Naive thymus-derived CD4-positive, alpha-beta T cell (primary cell): ENCODE measurements at regions of chr20 and their contacts with region 1.

Region 1: GRCh38 chr20:63657937-63658748 is at the start of gene RTEL1:
- DNase-seq: peak; percentile 79 to 99 (median 89)
- ATAC-seq: peak; percentile 90
- H3K4me3 ChIP-seq: peak within 1 kb of the TSS; percentile 100
- H3K4me3 Mint-ChIP-seq: peak within 1 kb of the TSS; percentile 86 to 97 (median 94)
- H3K27ac ChIP-seq: peak within 1 kb of the TSS; percentile 83
- H3K27ac Mint-ChIP-seq: peak within 1 kb of the TSS; percentile 93 to 97 (median 95)
- H3K4me1 ChIP-seq: peaks cover 18 to 20% of the 10 kb centered on the region in 2 donors
- H3K4me1 Mint-ChIP-seq: peaks cover 14 to 57% (median 36%) of the 10 kb centered on the region in 7 donors
- H3K27me3 ChIP-seq: no peaks in the 10 kb centered on the region
- H3K27me3 Mint-ChIP-seq: peaks cover 0 to 2% (median 0%) of the 10 kb centered on the region in 5 donors
- total RNA-seq, gene RTEL1: 28.4 to 47.2 (median 32.4) TPM

Region 2: GRCh38 chr20:62386383-62387218 is 1271.5 kb before region 1 on chr20 and contains the start of gene RPS21:
- CTCF ChIA-PET with region 1: no interaction called
- POLR2A ChIA-PET with region 1: no interaction called
- intact Hi-C with region 1: loop called in 1 of 2 experiments (anchors 10 kb)
- DNase-seq: peak; percentile 89 to 95 (median 92)
- ATAC-seq: peak; percentile 95
- H3K4me3 ChIP-seq: peak within 1 kb of the TSS; percentile 94
- H3K4me3 Mint-ChIP-seq: peak within 1 kb of the TSS; percentile 90 to 96 (median 92)
- H3K27ac ChIP-seq: peak within 1 kb of the TSS; percentile 98
- H3K27ac Mint-ChIP-seq: peak within 1 kb of the TSS; percentile 89 to 96 (median 93)
- H3K4me1 ChIP-seq: peaks cover 24 to 28% of the 10 kb centered on the region in 2 donors
- H3K4me1 Mint-ChIP-seq: peaks cover 40 to 59% (median 50%) of the 10 kb centered on the region in 7 donors
- H3K27me3 ChIP-seq: no peaks in the 10 kb centered on the region
- H3K27me3 Mint-ChIP-seq: no peaks in the 10 kb centered on the region
- total RNA-seq, gene RPS21: 2,026 to 3,407 (median 3,308) TPM

Region 3: GRCh38 chr20:63580796-63581461 is 77.2 kb before region 1 on chr20:
- CTCF ChIA-PET with region 1: interaction called, 3 read pairs
- POLR2A ChIA-PET with region 1: no interaction called
- intact Hi-C with region 1: loop called in 1 of 2 experiments (anchors 2 kb)
- DNase-seq: peak; percentile 30 to 87 (median 81)
- ATAC-seq: peak; percentile 96
- H3K4me3 ChIP-seq: no peak overlapping the region
- H3K4me3 Mint-ChIP-seq: peak overlapping the region in 1 of 10 donors; percentile 17
- H3K27ac ChIP-seq: no peak overlapping the region
- H3K27ac Mint-ChIP-seq: peak overlapping the region in 1 of 9 donors; percentile 74
- H3K4me1 ChIP-seq: peaks cover 0 to 10% of the 10 kb centered on the region in 2 donors
- H3K4me1 Mint-ChIP-seq: peaks cover 0 to 17% (median 14%) of the 10 kb centered on the region in 7 donors
- H3K27me3 ChIP-seq: no peaks in the 10 kb centered on the region
- H3K27me3 Mint-ChIP-seq: peaks cover 0 to 42% (median 0%) of the 10 kb centered on the region in 5 donors

Region 4: GRCh38 chr20:63627129-63627750 is 30.9 kb before region 1 on chr20:
- CTCF ChIA-PET with region 1: no interaction called
- POLR2A ChIA-PET with region 1: interaction called, 20 read pairs
- intact Hi-C with region 1: loop called (anchors 1 kb)
- DNase-seq: peak; percentile 74 to 99 (median 97)
- ATAC-seq: peak; percentile 93
- H3K4me3 ChIP-seq: peak overlapping the region; percentile 96
- H3K4me3 Mint-ChIP-seq: peak overlapping the region; percentile 93 to 99 (median 98)
- H3K27ac ChIP-seq: peak overlapping the region; percentile 85
- H3K27ac Mint-ChIP-seq: peak overlapping the region; percentile 79 to 98 (median 95)
- H3K4me1 ChIP-seq: peaks cover 29 to 40% of the 10 kb centered on the region in 2 donors
- H3K4me1 Mint-ChIP-seq: peaks cover 28 to 64% (median 42%) of the 10 kb centered on the region in 7 donors
- H3K27me3 ChIP-seq: no peaks in the 10 kb centered on the region
- H3K27me3 Mint-ChIP-seq: no peaks in the 10 kb centered on the region

Region 5: DNA sequence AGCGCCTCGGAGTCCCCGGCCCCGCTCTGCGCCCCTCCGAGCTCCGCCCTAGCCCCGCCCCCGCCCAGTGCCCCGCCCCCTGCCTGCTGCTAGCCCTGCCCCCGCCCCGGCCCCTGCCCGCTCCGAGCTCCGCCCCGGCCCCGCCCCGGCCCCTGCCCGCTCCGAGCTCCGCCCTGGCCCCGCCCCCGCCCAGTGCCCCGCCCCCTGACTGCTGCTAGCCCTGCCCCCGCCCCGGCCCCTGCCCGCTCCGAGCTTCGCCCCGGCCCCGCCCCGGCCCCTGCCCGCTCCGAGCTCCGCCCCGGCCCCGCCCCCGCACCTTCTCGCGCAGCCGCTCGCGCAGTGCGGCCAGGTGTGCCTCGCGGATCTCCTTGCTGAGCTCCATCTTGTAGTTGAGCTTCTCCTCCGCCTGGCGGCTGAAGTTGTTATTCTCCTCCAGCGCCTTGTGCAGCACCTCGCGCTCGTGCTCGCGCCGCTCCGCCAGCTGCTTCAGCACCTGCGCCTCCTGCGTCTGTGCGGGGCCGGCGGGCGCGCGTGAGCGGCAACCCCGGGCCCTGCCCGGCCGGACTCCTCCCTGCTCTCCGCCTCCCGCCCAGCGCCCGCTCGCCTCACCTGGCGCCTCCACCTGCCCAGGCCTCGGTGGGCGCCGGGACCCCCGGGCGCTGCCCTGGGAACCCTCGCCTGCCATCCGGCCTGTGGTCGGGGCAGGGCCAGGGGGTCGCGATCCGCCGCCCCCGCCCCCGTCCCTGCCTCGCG is 16.2 kb before region 1 on chr20:
- CTCF ChIA-PET with region 1: interaction called, 3 read pairs
- POLR2A ChIA-PET with region 1: interaction called, 53 read pairs
- intact Hi-C with region 1: loop called in 1 of 2 experiments (anchors 1 kb)
- DNase-seq: peak; percentile 94 to 98 (median 97)
- ATAC-seq: peak; percentile 86
- H3K4me3 ChIP-seq: peak overlapping the region; percentile 89
- H3K4me3 Mint-ChIP-seq: peak overlapping the region; percentile 57 to 92 (median 76)
- H3K27ac ChIP-seq: peak overlapping the region; percentile 90
- H3K27ac Mint-ChIP-seq: peak overlapping the region; percentile 66 to 98 (median 85)
- H3K4me1 ChIP-seq: peaks cover 23 to 24% of the 10 kb centered on the region in 2 donors
- H3K4me1 Mint-ChIP-seq: peaks cover 16 to 41% (median 28%) of the 10 kb centered on the region in 7 donors
- H3K27me3 ChIP-seq: no peaks in the 10 kb centered on the region
- H3K27me3 Mint-ChIP-seq: peaks cover 0 to 2% (median 0%) of the 10 kb centered on the region in 5 donors

Region 6: GRCh38 chr20:63980806-63981728 is 322.9 kb after region 1 on chr20 and contains the start of gene PRPF6:
- CTCF ChIA-PET with region 1: no interaction called
- POLR2A ChIA-PET with region 1: interaction called, 3 read pairs
- intact Hi-C with region 1: loop called (anchors 1 kb)
- DNase-seq: peak; percentile 89 to 95 (median 92)
- ATAC-seq: peak; percentile 85
- H3K4me3 ChIP-seq: peak within 1 kb of the TSS; percentile 78
- H3K4me3 Mint-ChIP-seq: peak within 1 kb of the TSS; percentile 88 to 97 (median 95)
- H3K27ac ChIP-seq: peak within 1 kb of the TSS; percentile 95
- H3K27ac Mint-ChIP-seq: peak within 1 kb of the TSS; percentile 87 to 99 (median 96)
- H3K4me1 ChIP-seq: peaks cover 34 to 47% of the 10 kb centered on the region in 2 donors
- H3K4me1 Mint-ChIP-seq: peaks cover 53 to 77% (median 65%) of the 10 kb centered on the region in 7 donors
- H3K27me3 ChIP-seq: no peaks in the 10 kb centered on the region
- H3K27me3 Mint-ChIP-seq: no peaks in the 10 kb centered on the region
- total RNA-seq, gene PRPF6: 71.2 to 95.8 (median 82.9) TPM